Aorta (tissue), 5 donors: ENCODE measurements at regions of chr12 and their contacts with region 1.

Region 1: DNA sequence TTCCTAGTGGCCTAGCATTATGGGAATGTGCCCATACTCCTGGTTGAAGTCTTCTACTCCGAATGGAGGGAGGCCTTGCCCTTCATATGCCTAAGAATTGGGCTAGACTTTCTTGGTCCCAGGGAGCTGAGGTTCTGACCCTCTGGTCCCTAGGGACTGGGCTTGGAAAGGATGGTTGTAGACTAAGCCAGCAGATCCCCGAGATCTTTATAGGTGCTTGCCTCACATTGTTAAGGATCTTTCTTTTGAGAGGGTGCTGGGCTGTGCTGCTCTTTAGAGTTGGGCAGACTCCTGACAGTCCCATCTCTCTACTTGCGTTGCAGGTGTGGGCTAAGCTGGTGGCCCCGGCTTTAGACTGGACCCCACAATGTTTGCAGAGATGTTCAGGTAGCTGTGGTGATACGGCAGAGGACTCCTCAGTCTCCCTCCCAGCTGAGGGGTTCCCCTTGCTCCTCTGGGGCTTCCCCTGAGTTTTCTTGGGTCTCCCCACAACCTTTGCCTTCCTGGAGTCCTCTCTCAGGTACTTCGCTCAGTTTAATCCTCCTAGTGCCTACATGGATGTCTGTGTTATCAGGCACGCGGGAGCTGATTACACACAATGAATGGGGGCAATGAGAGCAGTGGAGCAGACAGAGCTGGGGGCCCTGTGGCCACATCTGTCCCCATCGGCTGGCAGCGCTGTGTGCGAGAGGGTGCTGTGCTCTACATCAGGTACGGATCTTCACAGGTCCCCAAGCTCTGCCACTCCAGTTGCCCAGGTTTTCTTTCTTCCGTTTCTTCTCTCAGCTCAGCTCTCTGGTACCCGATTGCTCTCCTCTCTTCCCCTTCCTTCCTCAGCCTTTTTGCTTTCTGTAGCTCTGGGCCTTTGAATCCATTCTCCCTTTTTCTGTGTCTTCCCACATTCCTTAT is 1.3 kb downstream of the MBD6 start:
- DNase-seq: no peak
- ATAC-seq: no peak
- H3K4me3 ChIP-seq: peak overlapping the region; percentile 76 to 86
- H3K27ac ChIP-seq: no peak overlapping the region
- H3K4me1 ChIP-seq: peaks cover 0 to 2% of the 10 kb centered on the region in 2 donors
- H3K27me3 ChIP-seq: no peaks in the 10 kb centered on the region

Region 2: DNA sequence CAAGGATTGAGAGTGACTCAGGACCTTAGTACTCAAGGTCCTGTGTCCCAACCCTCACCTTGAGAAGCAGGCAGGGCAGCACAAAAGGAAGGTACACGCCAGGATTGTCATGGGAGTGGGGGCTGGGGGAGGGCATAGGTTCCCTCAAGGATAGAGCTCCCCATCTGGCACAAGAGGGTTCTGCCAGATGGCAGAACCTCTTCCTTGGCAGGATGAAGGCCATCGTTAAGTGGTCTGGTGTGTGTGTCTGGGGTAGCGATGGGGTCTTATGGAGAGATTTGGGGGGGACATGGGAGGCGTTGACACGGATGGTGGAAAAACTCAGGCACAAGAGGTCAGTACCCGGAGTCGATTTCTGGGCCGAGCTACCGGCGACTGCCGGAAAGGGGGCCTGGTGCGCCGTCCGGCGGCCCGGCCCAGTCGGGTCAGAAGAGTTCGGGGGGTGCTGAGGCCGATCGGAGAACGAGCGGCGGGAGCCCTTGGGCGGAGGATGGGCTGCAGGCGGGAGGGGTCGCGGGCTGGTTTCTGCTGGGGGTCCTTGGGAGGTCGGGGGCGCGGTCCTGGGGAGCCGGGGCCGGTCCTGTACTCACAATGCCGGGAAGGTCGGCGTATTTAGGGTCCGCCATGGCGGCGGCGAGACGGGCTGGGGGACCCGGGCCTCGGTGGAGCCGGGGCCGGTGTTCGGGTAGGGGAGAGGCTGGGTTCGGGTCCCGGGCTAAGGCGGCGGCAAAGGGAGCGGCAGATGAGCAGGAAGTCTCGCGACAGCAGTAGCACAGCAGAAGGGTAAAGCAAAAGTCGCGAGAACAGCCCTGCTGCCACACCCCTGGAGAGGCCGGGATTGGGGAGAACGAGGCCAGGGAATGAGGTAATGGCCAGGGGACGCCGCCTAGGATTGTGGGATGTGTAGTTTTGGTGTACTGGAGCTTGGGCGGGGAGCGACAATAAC is 22.8 kb after region 1 on chr12 and contains the start of gene DCTN2:
- intact Hi-C with region 1: loop called in 1 of 2 experiments (anchors 2 kb)
- DNase-seq: peak; percentile 97 to 98
- ATAC-seq: peak; percentile 100
- H3K4me3 ChIP-seq: peak within 1 kb of the TSS; percentile 73 to 82
- H3K27ac ChIP-seq: peak within 1 kb of the TSS in 1 of 2 donors; percentile 53
- H3K4me1 ChIP-seq: no peaks in the 10 kb centered on the region
- H3K27me3 ChIP-seq: no peaks in the 10 kb centered on the region
- total RNA-seq, gene DCTN2: 122 to 128 TPM